ENCODE measurements at regions of chr17 and their contacts with region 1.

Region 1: GRCh38 chr17:80036715-80037477 is 454 bp downstream of the CCDC40 start:
- DNase-seq: no peak
- H3K4me3 ChIP-seq: peak overlapping the region; percentile 82 to 88 (median 83)
- H3K27ac ChIP-seq: peak overlapping the region; percentile 92 to 93
- H3K4me1 ChIP-seq: no peaks in the 10 kb centered on the region
- H3K27me3 ChIP-seq: no peaks in the 10 kb centered on the region
- CTCF ChIP-seq: no peak
- POLR2A ChIP-seq: no peak

Region 2: DNA sequence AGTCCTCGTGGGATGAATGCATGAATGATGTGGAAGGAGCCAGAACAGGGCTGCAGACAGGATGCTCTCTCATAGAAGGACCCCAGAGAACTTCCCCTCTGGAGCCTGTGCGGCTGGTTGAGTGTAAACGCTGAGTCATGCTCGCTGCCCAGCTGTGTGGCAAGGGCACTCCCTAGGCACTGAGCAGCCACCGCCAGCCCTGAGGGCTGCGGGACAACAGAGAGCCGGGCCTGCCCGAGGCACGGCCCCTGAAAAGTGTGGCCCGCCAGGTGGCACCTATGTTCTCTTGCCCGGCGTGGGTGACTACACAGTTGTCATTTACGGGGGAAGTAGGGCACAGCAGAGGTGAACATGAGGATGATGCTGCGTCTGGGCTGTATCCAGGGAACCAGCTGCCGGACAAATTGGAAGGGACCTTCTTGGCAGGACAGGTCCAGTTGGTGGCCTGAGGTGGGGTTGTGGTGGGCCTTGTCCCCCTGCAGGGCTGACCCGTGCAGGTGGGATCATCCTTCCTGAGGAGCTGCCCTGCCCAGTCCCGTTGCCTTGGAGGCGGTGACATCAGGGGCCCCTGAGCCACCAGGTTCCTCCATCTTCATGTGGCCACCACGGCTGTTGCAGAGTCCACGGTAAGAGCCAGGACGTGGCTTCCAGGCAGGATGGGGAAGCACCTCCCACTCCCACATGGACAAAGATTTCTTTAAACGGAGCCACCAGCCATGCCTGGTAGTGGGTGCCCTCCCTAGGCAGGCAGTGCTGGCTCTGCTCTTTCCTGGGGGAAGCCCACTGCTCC is 102.8 kb before region 1 on chr17:
- intact Hi-C with region 1: no loop called
- DNase-seq: no peak
- H3K4me3 ChIP-seq: no peak overlapping the region
- H3K27ac ChIP-seq: no peak overlapping the region
- H3K4me1 ChIP-seq: peaks cover 0 to 6% of the 10 kb centered on the region in 2 donors
- H3K27me3 ChIP-seq: peaks cover 0 to 22% of the 10 kb centered on the region in 2 donors
- CTCF ChIP-seq: no peak
- POLR2A ChIP-seq: no peak

Region 3: GRCh38 chr17:80070375-80071115 is 33.6 kb after region 1 on chr17:
- intact Hi-C with region 1: loop called (anchors 1 kb)
- DNase-seq: no peak
- H3K4me3 ChIP-seq: peak overlapping the region; percentile 27 to 64 (median 43)
- H3K27ac ChIP-seq: peak overlapping the region; percentile 88 to 94
- H3K4me1 ChIP-seq: peaks cover 0 to 6% of the 10 kb centered on the region in 2 donors
- H3K27me3 ChIP-seq: no peaks in the 10 kb centered on the region
- CTCF ChIP-seq: no peak
- POLR2A ChIP-seq: no peak

Measured in breast epithelium (tissue), 4 donors.